ENCODE measurements at regions of chr6 and their contacts with region 1.

Region 1: GRCh38 chr6:151323791-151324487 is 67.4 kb downstream of the ZBTB2 start:
- DNase-seq: peak; percentile 88
- ATAC-seq: peak; percentile 68
- H3K4me3 ChIP-seq: peak overlapping the region; percentile 89
- H3K27ac ChIP-seq: peak overlapping the region; percentile 87
- H3K4me1 ChIP-seq: peaks cover 27% of the 10 kb centered on the region
- H3K27me3 ChIP-seq: no peaks in the 10 kb centered on the region
- CTCF ChIP-seq: peak; percentile 85

Region 2: DNA sequence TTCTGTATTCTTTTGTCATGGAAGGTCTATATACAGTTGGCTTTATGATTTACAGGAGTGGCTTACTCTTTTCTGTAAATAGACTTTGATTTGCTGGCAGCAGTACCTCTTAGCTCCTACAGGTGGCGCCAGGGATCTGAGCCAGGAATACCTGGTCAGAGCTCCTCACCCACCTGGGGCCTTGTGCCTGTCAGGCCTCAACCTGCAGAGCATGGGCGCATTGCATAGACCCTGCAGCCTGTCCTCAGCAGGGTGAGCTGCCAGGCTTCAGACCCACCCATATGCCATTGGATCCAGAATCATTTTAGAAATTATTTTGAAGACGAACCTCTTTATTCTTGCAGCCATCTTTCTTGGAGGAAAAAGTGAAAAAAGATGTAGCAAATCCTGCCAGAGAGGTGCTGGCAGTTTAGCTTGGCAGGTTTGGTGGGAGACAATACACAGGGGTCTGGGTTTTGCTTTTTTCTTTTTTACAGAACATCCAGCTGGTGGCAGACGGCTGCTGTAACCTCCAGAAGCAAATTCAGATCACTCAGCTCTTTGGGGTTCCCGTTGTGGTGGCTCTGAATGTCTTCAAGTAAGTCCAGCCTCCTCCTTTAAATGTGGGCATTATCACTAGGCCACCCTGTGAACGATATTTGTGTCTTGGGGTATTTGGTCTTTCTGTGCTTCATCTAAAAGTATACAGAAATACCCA is 309.4 kb before region 1 on chr6:
- CTCF ChIA-PET with region 1: interaction called, 13 read pairs
- POLR2A ChIA-PET with region 1: no interaction called
- intact Hi-C with region 1: loop called (anchors 1 kb)
- DNase-seq: peak; percentile 79
- ATAC-seq: peak; percentile 82
- H3K4me3 ChIP-seq: no peak overlapping the region
- H3K27ac ChIP-seq: peak overlapping the region; percentile 60
- H3K4me1 ChIP-seq: peaks cover 13% of the 10 kb centered on the region; the same call in 1 of the 2 replicates
- H3K27me3 ChIP-seq: no peaks in the 10 kb centered on the region
- CTCF ChIP-seq: peak; percentile 91

Region 3: DNA sequence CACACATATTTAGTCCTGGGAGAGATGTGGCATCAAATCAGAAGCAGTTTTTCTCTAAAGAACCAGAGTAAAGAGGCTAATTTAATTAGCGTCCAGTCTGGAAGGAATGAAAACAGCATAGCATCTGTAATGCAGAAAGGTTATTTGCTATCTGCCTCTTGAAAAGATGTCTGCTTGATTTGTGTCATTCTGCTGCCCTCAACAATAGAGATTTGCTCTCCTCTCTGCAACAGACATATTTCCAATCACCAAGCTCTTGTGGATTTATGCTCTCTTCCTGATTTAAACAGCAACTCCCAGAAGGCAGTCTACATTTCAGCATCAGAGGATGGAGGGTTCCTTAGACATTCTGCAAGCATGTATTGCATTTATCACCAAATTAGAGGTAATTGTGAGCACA is 137.6 kb before region 1 on chr6:
- CTCF ChIA-PET with region 1: no interaction called
- POLR2A ChIA-PET with region 1: interaction called, 15 read pairs
- intact Hi-C with region 1: no loop called
- DNase-seq: no peak
- ATAC-seq: no peak
- H3K4me3 ChIP-seq: no peak overlapping the region
- H3K27ac ChIP-seq: no peak overlapping the region
- H3K4me1 ChIP-seq: no peaks in the 10 kb centered on the region
- H3K27me3 ChIP-seq: no peaks in the 10 kb centered on the region
- CTCF ChIP-seq: no peak

Region 4: GRCh38 chr6:151374036-151374683 is 50.2 kb after region 1 on chr6:
- CTCF ChIA-PET with region 1: interaction called, 12 read pairs
- POLR2A ChIA-PET with region 1: no interaction called
- intact Hi-C with region 1: no loop called
- DNase-seq: peak; percentile 5
- ATAC-seq: no peak
- H3K4me3 ChIP-seq: peak overlapping the region; percentile 57; the same call in 1 of the 2 replicates
- H3K27ac ChIP-seq: 0 out of 2 replicates have a peak overlapping the region, but pooled peaks have one; percentile 20
- H3K4me1 ChIP-seq: peaks cover 15% of the 10 kb centered on the region
- H3K27me3 ChIP-seq: no peaks in the 10 kb centered on the region
- CTCF ChIP-seq: no peak

Region 5: DNA sequence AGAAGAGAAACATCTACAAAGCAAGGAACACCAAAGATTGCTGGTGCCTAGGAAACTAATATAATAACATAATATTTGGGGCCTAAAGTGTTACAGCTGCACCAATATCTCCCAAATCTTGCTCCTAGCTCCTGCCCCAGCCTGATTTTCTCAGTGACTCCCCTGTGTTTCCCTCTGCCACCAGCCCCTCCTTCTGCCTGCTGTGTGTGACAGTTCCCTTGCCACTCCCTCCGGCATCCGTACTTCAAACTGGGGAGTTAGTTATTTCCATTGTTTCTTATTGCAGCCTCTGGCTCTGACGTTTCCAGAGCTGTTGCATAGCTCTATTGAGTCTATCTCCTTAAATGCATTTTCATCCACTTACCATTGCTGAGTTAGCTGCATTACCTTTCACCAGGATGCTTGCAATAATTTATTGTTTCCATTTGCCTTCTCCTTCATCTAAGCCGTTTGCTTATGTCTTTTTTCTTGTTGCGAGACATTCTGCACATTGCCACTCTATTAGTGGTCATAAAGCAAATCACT is 526.6 kb after region 1 on chr6:
- CTCF ChIA-PET with region 1: no interaction called
- POLR2A ChIA-PET with region 1: no interaction called
- intact Hi-C with region 1: no loop called
- DNase-seq: no peak
- ATAC-seq: no peak
- H3K4me3 ChIP-seq: no peak overlapping the region
- H3K27ac ChIP-seq: no peak overlapping the region
- H3K4me1 ChIP-seq: no peaks in the 10 kb centered on the region
- H3K27me3 ChIP-seq: no peaks in the 10 kb centered on the region
- CTCF ChIP-seq: no peak